Natural killer cell (primary cell): ENCODE measurements at regions of chr3 and their contacts with region 1.

Region 1: DNA sequence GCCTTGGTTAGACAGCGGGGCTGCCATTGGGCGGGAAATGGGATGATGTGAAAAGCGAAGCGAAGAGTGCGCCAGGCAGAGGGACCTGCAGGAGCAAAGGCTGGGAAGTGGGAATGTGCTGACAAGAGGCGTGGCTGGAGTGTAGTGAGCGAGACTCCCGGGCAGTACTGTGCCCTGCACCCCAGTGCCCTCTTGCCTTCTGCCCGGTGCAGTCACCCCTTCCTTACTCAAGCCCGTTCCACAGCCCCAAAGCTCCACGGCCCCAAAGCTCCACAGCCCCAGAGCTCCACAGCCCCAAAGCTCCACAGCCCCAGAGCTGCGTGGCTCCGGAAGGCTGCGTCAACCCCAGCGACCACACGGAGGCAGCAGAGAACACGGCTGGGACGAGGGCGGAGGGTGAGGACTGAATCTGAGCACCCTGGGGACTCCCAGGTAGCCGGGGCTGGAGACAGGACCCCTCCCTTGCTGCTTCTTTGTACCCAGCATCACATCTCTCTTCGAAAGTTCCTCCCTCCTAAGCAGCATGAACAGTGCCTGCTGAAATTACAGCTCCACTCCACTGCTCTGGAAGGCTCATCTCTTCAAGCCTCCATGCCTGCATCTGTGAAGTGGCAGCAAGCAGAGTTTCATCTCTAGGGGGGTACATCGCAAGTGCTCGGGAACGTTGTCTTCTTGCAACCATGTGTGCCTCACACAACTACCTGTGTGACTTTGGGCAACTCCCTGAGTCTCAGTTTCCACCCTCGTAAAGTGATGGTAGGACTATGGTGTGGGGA is 108.9 kb downstream of the FBLN2 start:
- DNase-seq: peak; percentile 48 to 87
- ATAC-seq: peak; percentile 75 to 90 (median 88)
- H3K4me3 ChIP-seq: no peak overlapping the region
- H3K4me3 Mint-ChIP-seq: no peak overlapping the region
- H3K27ac ChIP-seq: no peak overlapping the region
- H3K27ac Mint-ChIP-seq: no peak overlapping the region
- H3K4me1 ChIP-seq: peaks cover 33% of the 10 kb centered on the region
- H3K4me1 Mint-ChIP-seq: peaks cover 0 to 24% of the 10 kb centered on the region in 2 donors
- H3K27me3 ChIP-seq: no peaks in the 10 kb centered on the region
- H3K27me3 Mint-ChIP-seq: peaks cover 10 to 24% of the 10 kb centered on the region in 2 donors
- CTCF ChIP-seq: peak; percentile 43

Region 2: DNA sequence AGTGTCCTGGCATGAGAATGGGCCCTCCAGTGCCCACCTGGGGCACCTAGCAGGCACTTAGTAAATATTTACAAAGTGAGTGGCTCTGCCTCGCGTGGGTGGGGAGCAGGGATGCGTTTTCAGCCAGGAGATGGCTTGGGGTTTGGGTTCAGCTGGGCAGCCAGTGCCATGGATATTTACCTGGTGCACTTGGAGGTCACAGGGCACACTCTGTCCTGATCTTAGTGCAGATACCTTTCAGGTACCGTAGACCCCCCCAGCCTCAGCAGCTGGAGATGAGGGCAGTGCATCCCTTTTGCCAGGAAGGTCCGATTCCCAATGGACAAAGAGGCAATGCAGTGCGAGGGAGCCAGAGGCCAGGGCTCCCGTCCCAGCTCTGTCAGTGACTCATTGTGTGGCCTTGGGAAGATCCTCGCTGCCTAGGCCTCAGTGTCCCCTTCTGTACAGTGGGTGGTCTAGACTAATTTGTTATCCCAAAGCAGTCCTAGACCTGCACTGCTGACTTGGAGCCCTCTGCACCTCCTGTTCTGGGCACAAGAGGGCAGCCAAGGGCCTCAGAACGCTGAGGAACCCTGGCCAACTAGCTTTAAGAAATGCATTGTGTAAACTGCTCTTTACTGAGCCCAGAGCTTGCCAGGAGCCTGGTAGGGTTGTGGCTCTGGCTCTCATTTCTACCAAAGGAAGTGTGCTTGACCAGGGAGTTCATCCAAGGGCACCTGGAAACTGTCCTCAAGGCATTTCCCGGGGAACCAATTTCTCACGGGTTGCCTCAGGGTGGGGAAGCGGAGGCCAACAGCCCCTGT is 161.7 kb before region 1 on chr3:
- intact Hi-C with region 1: loop called (anchors 1 kb)
- DNase-seq: peak; percentile 66 to 83
- ATAC-seq: peak; percentile 83 to 98 (median 93)
- H3K4me3 ChIP-seq: no peak overlapping the region
- H3K4me3 Mint-ChIP-seq: no peak overlapping the region
- H3K27ac ChIP-seq: no peak overlapping the region
- H3K27ac Mint-ChIP-seq: no peak overlapping the region
- H3K4me1 ChIP-seq: peaks cover 48% of the 10 kb centered on the region
- H3K4me1 Mint-ChIP-seq: peaks cover 13 to 41% of the 10 kb centered on the region in 2 donors
- H3K27me3 ChIP-seq: no peaks in the 10 kb centered on the region
- H3K27me3 Mint-ChIP-seq: no peaks in the 10 kb centered on the region
- CTCF ChIP-seq: peak; percentile 86

Region 3: DNA sequence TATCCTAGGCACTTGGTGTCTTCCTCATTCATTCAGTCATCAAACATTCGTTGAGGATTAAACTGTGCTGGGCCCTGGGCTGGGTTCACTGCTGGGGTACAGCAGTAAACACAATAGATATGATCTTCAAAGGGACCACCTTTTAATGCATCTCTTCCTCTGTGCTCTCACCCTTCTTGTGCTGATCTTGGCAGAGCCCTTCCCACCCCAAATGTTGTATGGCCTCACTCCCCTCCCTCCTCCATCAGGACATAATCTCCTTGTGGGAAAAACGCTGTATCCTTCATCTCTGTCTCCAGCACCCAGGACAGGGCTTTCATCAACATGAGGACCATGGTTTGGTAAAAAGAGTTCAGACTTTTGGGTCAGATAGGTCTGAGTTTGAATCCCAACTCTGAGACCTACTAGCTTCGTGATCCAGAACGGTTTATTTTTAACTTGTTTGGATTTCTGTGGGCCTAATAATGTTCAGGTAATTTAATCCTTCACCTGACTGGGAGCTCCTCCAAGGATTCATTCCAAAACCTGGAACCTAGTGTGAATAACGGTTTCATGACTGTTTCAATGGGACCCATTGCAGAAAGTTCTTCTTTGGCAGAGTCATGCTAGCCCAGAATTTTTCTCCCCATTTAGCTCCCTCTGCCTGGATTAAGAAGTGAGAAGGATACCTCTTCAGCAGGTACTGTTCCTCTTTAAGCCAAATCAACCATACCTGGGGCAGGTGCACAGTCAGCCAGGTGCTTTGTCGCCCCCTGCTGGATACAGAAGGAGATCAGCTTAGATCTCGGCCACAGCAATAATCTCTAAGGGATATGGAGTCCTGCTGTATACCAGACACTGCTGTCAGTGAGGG is 227.2 kb after region 1 on chr3:
- intact Hi-C with region 1: loop called (anchors 5 kb)
- DNase-seq: peak in 1 of 2 donors; percentile 88
- ATAC-seq: peak; percentile 38 to 74 (median 53)
- H3K4me3 ChIP-seq: no peak overlapping the region
- H3K4me3 Mint-ChIP-seq: no peak overlapping the region
- H3K27ac ChIP-seq: no peak overlapping the region
- H3K27ac Mint-ChIP-seq: no peak overlapping the region
- H3K4me1 ChIP-seq: peaks cover 12% of the 10 kb centered on the region
- H3K4me1 Mint-ChIP-seq: no peaks in the 10 kb centered on the region
- H3K27me3 ChIP-seq: peaks cover 18% of the 10 kb centered on the region
- H3K27me3 Mint-ChIP-seq: peaks cover 32 to 39% of the 10 kb centered on the region in 2 donors
- CTCF ChIP-seq: peak; percentile 60

Region 4: DNA sequence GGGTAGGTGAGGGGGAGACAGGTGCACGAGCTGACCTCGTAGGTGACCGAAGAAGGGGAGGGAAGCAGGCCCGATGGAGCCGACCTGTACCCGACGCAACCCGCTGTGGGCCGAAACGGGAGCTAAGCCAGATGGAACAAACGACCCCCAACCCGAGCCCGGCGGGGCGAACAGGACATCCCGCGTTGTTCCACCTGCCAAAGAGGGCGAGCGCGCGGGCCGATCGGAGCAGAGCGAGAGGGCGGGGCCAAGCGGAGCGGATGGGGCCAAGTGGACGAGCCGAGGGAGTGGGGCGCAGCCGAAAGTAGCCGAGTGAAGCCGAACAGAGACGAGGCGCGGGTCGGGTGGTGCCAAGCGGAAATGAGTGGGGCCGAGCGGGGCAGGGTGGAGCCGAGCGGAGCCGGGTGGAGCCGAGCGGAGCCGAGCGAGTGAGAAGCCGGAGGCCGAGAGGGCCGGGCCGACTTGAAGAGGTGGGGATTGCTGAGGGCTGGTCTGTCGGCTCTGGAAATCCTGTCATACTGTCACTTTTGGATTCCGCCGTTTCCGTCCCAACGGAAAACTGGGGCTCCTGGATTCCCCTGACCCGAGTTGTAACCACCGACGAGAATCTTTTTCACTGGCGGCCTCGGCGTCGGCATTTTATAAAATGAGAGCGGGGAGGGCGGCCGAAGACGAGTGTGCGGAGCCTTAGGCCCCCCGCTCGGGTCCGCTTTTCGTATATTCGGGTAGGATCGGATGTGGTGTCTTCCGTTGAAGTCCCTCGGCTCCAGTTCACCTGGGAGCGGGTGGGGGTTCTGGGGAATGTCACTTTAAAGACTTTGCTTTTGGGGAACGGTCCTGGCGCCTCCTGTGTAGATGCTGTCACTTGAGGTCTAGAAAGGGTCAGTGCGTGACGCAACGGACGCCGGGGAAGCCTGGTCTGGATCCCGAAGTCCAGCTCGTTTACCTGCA is 237.6 kb after region 1 on chr3:
- intact Hi-C with region 1: no loop called
- DNase-seq: peak; percentile 95 to 96
- ATAC-seq: peak; percentile 98 to 99 (median 98)
- H3K4me3 ChIP-seq: peak overlapping the region; percentile 72
- H3K4me3 Mint-ChIP-seq: peak overlapping the region; percentile 76
- H3K27ac ChIP-seq: peak overlapping the region; percentile 69
- H3K27ac Mint-ChIP-seq: peak overlapping the region; percentile 86 to 92
- H3K4me1 ChIP-seq: peaks cover 30% of the 10 kb centered on the region
- H3K4me1 Mint-ChIP-seq: peaks cover 21 to 26% of the 10 kb centered on the region in 2 donors
- H3K27me3 ChIP-seq: no peaks in the 10 kb centered on the region
- H3K27me3 Mint-ChIP-seq: peaks cover 0 to 6% of the 10 kb centered on the region in 2 donors
- CTCF ChIP-seq: no peak

Region 5: DNA sequence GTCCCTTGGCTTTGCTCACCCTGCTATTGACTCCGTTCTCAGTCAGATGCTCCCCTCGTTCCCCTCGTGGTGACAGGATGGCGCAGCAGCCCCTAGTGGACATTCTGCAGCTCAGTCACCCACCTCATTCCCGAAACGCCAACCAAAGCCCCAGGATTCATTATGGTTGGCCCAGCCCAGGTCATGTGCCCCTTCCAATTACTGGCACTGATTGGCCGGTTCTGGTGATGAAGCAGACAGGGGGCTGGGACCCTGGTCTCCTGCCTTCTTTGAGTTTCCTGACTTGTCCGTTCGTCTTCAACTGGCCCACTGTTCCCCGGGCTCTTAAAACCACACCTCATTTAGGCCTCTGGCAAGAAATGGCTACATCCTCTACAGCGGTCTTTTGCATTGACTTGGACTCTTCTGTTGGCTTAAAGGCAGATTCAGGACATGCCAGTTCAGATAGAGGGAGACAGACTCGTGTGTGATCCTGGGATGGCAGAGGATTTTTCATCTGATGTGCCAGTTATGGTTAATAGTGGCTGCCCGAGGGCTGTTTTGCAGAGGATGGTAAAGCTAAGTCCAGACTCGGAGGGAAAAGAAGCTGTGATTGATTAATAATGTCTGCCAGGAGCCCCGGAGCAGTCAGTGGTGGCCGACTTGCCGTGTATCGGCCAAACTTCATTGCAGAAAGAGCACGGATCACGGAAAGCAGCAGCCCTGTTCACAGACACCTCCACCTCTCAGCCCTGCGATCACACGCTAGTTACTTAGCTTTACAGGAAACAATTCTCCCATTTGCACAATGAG is 558.6 kb after region 1 on chr3:
- intact Hi-C with region 1: loop called (anchors 5 kb)
- DNase-seq: peak; percentile 47 to 65
- ATAC-seq: peak in 2 of 3 donors; percentile 67 to 96
- H3K4me3 ChIP-seq: no peak overlapping the region
- H3K4me3 Mint-ChIP-seq: peak overlapping the region; percentile 49
- H3K27ac ChIP-seq: no peak overlapping the region
- H3K27ac Mint-ChIP-seq: peak overlapping the region in 1 of 2 donors; percentile 88
- H3K4me1 ChIP-seq: no peaks in the 10 kb centered on the region
- H3K4me1 Mint-ChIP-seq: peaks cover 0 to 15% of the 10 kb centered on the region in 2 donors
- H3K27me3 ChIP-seq: no peaks in the 10 kb centered on the region
- H3K27me3 Mint-ChIP-seq: peaks cover 8 to 9% of the 10 kb centered on the region in 2 donors
- CTCF ChIP-seq: peak; percentile 61